Transverse colon (tissue), 4 donors: ENCODE measurements at regions of chr19 and their contacts with region 1.

Region 1: DNA sequence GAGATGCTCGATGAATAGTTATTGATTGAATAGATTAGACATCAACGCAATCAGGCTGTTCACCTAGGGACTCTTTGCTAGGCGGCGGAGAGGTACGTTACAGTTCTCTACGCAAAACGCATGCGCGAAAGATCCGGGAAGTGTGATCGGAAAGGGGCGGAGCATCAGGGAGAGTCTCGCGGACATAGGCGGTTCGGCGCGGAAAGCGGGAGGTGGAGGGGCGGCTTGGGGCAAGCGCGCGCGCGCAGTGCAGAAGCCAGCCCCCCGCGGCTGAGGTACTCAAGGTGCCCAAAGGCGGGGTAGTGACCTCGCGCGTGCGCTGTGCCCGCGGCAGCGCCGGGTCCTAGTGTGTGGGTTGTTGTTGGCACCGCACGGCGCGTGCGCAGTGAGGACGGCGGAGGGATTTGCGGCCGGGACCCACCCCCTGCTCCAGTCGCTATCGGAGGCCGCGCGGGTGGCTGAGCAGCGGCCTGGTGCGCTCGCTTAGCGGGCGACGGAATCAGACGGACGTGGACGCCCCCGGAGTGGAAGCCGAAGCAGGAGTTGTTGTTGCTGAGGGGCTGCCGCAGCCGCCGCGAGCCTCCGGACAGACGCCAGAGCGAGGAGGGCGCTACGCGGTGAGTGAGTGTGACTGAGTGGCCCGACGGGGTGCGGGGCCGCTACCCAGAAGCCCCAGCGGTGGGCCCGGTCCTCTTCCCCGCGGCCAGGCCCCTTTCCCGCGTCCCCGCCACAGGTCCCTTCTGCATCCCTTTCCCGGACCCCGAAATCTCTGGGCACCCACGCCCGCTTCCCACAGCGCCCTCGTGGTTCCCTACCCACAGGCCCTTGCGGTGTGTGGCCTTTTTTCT is at the start of gene SNRNP70:
- DNase-seq: peak; percentile 99
- H3K4me3 ChIP-seq: peak within 1 kb of the TSS; percentile 81 to 100 (median 90)
- H3K27ac ChIP-seq: peak within 1 kb of the TSS; percentile 90 to 96 (median 94)
- H3K4me1 ChIP-seq: peaks cover 13 to 28% (median 22%) of the 10 kb centered on the region in 4 donors
- H3K27me3 ChIP-seq: no peaks in the 10 kb centered on the region
- CTCF ChIP-seq: peak in 1 of 5 experiments; percentile 18
- EP300 ChIP-seq: no peak
- POLR2A ChIP-seq: peak; percentile 87
- total RNA-seq, gene SNRNP70: 216 to 682 (median 292) TPM

Region 2: GRCh38 chr19:49188626-49189200 is 103.5 kb after region 1 on chr19:
- in situ Hi-C with region 1: no loop called
- intact Hi-C with region 1: no loop called
- DNase-seq: no peak
- H3K4me3 ChIP-seq: no peak overlapping the region
- H3K27ac ChIP-seq: no peak overlapping the region
- H3K4me1 ChIP-seq: peaks cover 0 to 28% (median 5%) of the 10 kb centered on the region in 4 donors
- H3K27me3 ChIP-seq: no peaks in the 10 kb centered on the region
- CTCF ChIP-seq: no peak
- EP300 ChIP-seq: no peak
- POLR2A ChIP-seq: no peak

Region 3: GRCh38 chr19:49200238-49200862 is 115.1 kb after region 1 on chr19:
- in situ Hi-C with region 1: loop called in 3 of 4 experiments (anchors 10 to 25 kb)
- intact Hi-C with region 1: no loop called
- DNase-seq: peak; percentile 61
- H3K4me3 ChIP-seq: no peak overlapping the region
- H3K27ac ChIP-seq: peak overlapping the region; percentile 64 to 84 (median 70)
- H3K4me1 ChIP-seq: peaks cover 9 to 65% (median 47%) of the 10 kb centered on the region in 4 donors
- H3K27me3 ChIP-seq: no peaks in the 10 kb centered on the region
- CTCF ChIP-seq: no peak
- EP300 ChIP-seq: no peak
- POLR2A ChIP-seq: no peak

Region 4: DNA sequence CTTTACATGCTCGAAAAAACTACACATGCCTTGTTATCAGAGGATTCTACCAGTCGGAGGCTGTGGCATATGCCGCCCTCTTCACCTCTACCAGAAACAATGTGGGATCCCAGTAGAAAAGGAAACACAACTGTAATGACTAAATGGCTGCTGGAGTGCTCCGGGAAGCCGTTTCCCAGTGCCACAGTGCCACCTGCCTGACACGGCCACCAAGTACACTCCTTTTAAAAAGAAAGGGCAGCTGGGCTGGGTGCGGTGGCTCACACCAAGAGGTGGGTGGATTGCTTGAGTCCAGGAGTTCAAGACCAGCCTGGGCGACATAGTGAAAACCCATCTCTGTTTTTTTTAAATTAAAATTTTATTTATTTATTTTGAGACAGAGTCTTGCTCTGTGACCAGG is 139.6 kb after region 1 on chr19:
- in situ Hi-C with region 1: loop called in 2 of 4 experiments (anchors 5 to 25 kb)
- intact Hi-C with region 1: no loop called
- DNase-seq: peak; percentile 77
- H3K4me3 ChIP-seq: no peak overlapping the region
- H3K27ac ChIP-seq: no peak overlapping the region
- H3K4me1 ChIP-seq: peaks cover 0 to 8% (median 1%) of the 10 kb centered on the region in 4 donors
- H3K27me3 ChIP-seq: no peaks in the 10 kb centered on the region
- CTCF ChIP-seq: peak; percentile 26 to 62 (median 52)
- EP300 ChIP-seq: no peak
- POLR2A ChIP-seq: no peak